ENCODE measurements at regions of chr15 and their contacts with region 1.

Region 1: DNA sequence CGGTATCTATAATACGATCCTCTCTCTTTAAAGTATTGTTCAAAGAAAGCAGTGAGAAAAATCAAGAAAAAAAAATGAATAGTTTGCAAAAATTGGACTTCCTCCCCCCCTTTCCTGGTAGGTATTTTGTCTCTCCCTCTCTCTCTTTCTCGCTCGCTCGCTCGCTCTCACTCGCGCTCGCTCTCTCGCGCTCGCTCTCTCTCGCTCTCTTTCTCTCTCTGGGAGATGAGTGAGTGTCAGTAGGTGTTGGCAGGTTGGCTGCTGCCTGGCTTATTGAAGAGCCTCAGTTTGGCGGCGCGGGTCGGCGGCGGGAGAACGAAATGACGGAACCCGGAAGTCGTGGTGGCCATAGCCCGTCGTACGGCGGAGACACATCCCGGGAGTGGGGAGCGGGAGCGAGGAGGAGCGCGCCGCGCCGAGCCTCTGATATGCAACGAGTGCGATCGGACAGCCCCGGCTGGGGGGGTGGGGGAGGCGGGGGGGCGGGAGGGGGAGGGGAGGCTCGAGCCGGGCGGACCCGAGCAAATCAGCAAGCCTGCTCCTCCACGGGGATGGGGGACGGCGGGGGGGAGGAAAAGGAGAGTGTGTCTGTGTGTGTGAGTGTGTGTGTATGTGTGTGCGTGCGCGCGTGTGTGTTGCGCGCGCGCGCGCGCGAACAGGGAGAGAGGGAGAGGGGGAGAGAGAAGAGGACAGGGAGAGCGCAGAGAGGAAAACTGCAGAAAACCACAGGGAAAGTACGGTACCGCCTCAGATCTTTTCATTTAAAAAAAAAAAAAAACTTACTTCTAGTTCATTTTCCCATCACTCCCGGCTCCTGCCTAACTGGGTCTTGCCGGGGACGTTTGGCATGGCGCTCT is at the start of gene MEIS2:
- DNase-seq: peak; percentile 87
- ATAC-seq: peak; percentile 20
- H3K4me3 Mint-ChIP-seq: peak within 1 kb of the TSS; percentile 86
- H3K27ac Mint-ChIP-seq: peak within 1 kb of the TSS; percentile 50
- H3K4me1 Mint-ChIP-seq: peaks cover 68% of the 10 kb centered on the region
- H3K27me3 Mint-ChIP-seq: peaks cover 86% of the 10 kb centered on the region
- CTCF ChIP-seq: no peak
- total RNA-seq, gene MEIS2: 0.30 to 1.2 TPM (median 0.57 TPM) in 3 replicates

Region 2: DNA sequence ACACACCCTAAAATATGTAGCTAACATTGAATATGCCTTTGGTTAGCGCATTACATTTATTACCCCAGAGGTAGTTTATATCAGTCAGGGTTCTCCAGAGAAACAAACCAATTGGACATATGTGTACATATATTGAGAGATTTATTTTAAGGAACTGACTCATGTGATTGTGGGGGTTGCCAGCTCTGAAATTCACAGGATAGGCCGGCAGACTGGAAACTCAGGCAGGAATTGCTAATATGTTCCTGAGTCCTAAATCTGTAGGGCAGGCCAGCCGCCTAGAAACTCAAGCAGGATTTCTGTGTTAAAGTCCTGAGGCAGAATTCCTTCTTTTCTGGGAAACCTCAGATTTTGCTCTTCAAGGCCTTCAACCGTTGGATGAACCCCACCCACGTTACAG is 331.2 kb before region 1 on chr15:
- CTCF ChIA-PET with region 1: interaction called, 6 read pairs
- POLR2A ChIA-PET with region 1: interaction called, 11 read pairs
- DNase-seq: no peak
- ATAC-seq: no peak
- H3K4me3 Mint-ChIP-seq: no peak overlapping the region
- H3K27ac Mint-ChIP-seq: no peak overlapping the region
- H3K4me1 Mint-ChIP-seq: peaks cover 12% of the 10 kb centered on the region
- H3K27me3 Mint-ChIP-seq: no peaks in the 10 kb centered on the region
- CTCF ChIP-seq: no peak

Region 3: DNA sequence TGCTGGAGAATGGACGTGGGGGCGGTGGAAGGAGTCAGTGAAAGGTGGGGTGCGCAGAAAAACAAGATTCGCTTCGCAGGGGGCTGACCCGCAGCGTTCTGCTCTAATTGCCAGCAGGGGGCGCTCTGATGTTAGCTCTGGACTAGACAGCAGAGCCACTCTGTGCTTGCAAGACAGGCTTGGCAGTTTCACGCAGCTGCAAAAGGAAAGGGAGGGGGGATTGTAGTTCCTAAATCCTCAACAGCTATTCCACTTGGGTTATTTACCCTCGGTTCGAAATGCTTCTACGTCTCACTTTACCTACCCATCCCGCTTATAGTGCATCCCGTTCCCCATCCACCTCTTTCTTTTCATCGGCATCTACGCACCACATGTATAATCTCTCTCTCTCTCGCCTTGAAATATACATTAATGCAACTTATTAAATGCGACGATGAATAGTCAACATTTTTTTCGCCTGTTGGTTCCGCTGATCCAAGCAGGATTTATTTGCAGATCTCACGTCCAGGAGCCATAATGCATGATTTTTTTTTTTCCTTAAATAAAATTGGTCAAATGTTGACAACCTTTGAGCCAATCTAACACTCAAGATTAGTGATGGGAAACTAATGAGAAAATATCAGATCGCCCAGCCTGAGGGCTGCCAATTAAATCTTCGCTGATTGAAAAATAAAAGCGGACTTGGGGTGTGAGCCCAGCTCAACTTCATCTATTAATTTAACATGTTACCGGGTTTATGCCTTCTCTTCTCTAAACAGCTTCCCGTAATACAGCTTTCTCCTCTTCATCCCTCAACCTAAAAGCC is 216.4 kb before region 1 on chr15:
- CTCF ChIA-PET with region 1: interaction called, 31 read pairs
- POLR2A ChIA-PET with region 1: interaction called, 9 read pairs
- DNase-seq: peak; percentile 92
- ATAC-seq: peak; percentile 33
- H3K4me3 Mint-ChIP-seq: peak overlapping the region; percentile 42
- H3K27ac Mint-ChIP-seq: no peak overlapping the region
- H3K4me1 Mint-ChIP-seq: peaks cover 86% of the 10 kb centered on the region
- H3K27me3 Mint-ChIP-seq: peaks cover 100% of the 10 kb centered on the region
- CTCF ChIP-seq: peak; percentile 87